ENCODE measurements at regions of chr9 and their contacts with region 1.

Region 1: DNA sequence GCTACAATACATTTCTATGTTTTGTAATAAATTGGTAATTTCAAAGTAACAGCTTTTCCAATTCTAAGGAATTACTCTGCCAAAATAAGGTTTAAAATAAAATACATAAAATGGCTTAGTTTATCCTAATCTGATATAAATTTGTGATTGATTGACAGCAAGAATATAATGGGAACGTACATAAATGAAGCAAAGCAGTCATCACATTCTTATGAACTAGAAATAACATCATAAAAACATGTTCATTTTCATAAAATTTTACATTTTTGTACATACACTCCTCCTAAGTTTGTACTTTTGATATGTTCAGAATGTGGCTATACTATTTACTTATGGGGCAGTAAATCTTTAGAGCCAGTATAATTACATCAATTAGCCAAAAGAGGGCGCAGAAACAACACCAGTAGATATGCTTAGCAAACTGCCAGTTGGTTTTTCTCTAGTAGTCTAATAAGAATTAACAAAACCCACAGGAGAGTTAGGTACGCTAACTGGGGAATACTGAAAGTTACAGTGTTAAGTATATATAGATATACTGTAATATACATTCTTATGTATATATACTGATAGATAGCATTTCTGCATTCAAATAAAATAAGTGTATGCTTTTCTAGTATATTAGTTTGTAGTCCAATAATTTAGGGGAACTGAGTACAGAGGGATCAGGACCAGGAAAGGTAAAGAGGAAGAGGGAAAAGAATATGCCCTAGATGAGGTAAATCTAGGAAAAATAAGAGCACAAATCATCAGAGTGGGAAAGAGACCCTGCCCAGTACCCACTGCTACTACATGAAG is 76.8 kb downstream of the ZDHHC21 start:
- DNase-seq: no peak
- H3K4me3 ChIP-seq: no peak overlapping the region
- H3K27ac ChIP-seq: no peak overlapping the region
- H3K4me1 ChIP-seq: no peaks in the 10 kb centered on the region
- H3K27me3 ChIP-seq: no peaks in the 10 kb centered on the region
- CTCF ChIP-seq: peak in 3 of 4 experiments; percentile 33 to 61 (median 37)
- EP300 ChIP-seq: no peak
- POLR2A ChIP-seq: no peak

Region 2: DNA sequence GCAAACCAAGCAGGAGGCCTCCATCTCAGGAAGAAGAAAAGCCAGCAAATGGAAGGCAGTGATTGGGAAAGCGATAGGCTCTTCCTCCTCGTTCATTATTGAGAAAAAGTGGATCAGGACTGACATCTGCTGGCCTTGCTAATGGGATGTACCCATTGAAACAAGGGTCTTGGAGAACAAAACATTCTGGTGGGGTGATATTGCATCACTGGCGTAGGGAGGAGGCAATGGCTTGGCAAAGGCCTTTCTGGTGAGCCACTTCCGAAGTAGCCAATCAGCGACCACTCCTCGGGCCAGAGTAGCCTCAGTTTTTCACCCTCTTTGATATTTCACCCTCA is 215.8 kb before region 1 on chr9:
- intact Hi-C with region 1: no loop called
- DNase-seq: peak; percentile 80
- H3K4me3 ChIP-seq: no peak overlapping the region
- H3K27ac ChIP-seq: no peak overlapping the region
- H3K4me1 ChIP-seq: peaks cover 0 to 17% (median 7%) of the 10 kb centered on the region in 4 donors
- H3K27me3 ChIP-seq: no peaks in the 10 kb centered on the region
- CTCF ChIP-seq: peak in 3 of 4 experiments; percentile 41 to 54 (median 44)
- EP300 ChIP-seq: no peak
- POLR2A ChIP-seq: no peak

Region 3: DNA sequence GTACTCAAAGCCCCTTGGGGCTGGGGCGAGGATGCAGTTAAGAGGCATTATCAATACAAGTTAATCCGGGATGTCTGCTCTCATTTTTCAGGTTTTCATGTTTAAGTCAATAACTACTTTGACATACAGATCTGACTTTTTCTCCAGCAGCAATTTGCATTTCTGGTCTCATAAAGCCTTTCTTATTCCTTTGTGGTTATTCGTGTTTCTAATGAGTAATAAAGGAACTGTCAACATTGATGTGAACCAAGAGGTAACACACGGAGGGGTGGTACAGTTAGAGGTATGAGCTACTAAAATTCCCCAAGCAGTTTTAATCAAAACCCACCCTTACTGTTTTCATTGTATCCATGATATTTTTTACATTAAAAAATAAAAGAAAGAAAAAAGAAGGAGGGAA is 164.4 kb before region 1 on chr9:
- intact Hi-C with region 1: no loop called
- DNase-seq: no peak
- H3K4me3 ChIP-seq: no peak overlapping the region
- H3K27ac ChIP-seq: no peak overlapping the region
- H3K4me1 ChIP-seq: no peaks in the 10 kb centered on the region
- H3K27me3 ChIP-seq: no peaks in the 10 kb centered on the region
- CTCF ChIP-seq: no peak
- EP300 ChIP-seq: no peak
- POLR2A ChIP-seq: no peak

Region 4: GRCh38 chr9:14661421-14662059 is 45.2 kb after region 1 on chr9:
- intact Hi-C with region 1: loop called (anchors 5 kb)
- DNase-seq: no peak
- H3K4me3 ChIP-seq: no peak overlapping the region
- H3K27ac ChIP-seq: no peak overlapping the region
- H3K4me1 ChIP-seq: peaks cover 0 to 24% (median 9%) of the 10 kb centered on the region in 4 donors
- H3K27me3 ChIP-seq: no peaks in the 10 kb centered on the region
- CTCF ChIP-seq: peak in 2 of 4 experiments; percentile 34 to 44
- EP300 ChIP-seq: no peak
- POLR2A ChIP-seq: no peak

Region 5: DNA sequence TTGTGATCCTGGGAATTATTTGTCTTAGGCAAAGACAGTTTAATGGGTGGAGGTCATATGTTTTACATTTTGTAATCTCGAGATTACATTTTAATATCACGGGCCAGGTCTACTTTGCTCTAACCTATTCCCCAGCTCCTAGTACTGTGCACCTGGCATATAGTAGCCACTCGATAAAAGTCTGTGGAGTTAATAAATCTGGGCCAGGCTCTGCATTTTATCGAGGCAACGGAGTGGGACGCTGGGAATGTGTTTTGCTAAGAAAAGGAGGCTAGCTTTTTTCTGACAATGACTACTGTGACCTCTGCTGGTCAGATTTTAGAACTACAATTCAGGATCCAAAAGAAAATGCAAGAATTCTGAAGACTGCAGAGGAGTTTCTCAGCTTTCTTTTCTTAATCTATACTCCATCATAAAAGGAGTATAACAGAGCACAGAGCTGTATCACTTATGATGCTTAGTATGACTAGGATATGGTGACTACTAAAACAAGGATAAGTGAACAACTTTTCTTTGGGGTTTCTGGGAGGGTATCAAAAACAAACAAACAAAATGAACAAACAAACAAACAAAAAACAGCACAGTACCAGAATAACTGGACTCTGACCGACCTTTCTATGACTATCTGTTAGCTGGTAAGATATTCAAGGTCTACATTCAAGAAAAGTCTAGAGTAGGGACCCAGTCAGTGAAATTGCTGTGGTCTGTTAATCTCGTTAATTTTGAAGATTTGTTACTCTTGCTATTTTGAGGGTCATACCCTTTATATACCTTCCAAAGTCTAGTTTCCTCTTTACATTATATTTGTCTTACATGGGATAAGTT is 152.2 kb after region 1 on chr9:
- intact Hi-C with region 1: loop called (anchors 5 kb)
- DNase-seq: no peak
- H3K4me3 ChIP-seq: no peak overlapping the region
- H3K27ac ChIP-seq: no peak overlapping the region
- H3K4me1 ChIP-seq: no peaks in the 10 kb centered on the region
- H3K27me3 ChIP-seq: no peaks in the 10 kb centered on the region
- CTCF ChIP-seq: peak; percentile 26 to 83 (median 58)
- EP300 ChIP-seq: no peak
- POLR2A ChIP-seq: no peak